BJ (cell line): ENCODE measurements at regions of chr6 and their contacts with region 1.

Region 1: DNA sequence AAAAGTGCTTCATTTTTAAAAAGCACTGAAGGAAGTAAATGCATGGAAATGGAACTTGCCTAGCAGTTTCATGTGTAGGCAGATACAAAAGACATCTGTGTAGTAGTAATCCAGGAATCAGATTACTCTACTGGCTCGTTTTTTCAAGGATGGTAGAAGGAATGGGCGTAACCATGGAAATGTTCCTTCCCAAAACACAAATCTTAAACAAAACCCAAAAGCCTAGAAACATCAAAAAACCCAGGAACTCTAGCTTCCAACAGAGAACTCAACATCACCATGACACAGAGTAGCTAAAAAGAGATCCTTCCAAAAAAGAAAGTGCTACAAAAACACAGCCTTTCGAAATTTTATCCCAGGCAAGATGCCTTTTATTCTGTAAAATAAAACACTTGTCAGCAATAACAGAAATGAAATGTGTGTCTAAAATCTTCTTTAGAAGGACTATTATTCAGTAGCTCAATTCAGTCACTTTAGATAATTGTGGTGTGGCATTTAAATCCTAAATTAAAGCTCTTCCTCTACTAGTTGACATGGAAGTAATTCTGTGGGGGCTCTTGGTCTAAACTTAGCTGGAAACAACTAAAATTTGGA is 81.7 kb downstream of the FAM217A start:
- DNase-seq: peak; percentile 65
- H3K4me3 ChIP-seq: no peak overlapping the region
- H3K27me3 ChIP-seq: no peaks in the 10 kb centered on the region
- CTCF ChIP-seq: no peak

Region 2: DNA sequence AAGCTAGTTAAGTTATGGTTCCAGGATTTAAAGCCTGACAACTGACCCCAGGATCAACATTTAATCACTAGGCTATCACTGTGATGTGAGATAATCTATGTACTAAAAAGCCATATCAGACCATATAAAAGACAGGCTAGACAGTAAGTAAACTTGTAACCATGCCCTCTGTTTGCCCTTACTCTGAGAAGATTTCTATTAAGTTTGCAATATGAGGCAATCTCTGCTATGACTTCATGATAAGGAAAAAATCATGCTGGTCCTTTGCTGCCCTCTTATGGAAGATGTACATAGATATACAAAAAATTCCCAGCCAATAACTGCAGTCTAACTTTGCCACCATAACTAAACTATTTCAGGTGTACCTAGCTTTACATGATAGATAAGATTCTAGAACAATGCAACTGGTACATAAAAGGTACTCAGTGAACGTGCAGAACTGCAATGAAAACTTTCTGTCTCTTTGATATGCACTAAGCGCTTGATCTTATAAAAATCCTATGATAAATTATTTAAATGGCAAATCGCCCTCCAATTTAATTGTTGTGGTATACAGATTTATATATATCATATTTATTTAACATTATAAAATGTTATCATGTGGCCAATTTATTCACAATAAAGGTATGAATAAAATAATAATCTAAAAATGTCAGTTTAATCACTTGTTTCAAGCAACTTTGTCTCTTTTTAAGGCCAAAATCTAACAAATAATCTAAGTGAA is 11.2 kb after region 1 on chr6:
- CTCF ChIA-PET with region 1: interaction called, 13 read pairs
- POLR2A ChIA-PET with region 1: no interaction called
- DNase-seq: peak; percentile 77
- H3K4me3 ChIP-seq: no peak overlapping the region
- H3K27me3 ChIP-seq: no peaks in the 10 kb centered on the region
- CTCF ChIP-seq: peak; percentile 65

Region 3: GRCh38 chr6:4125936-4126864 is 128.9 kb after region 1 on chr6:
- CTCF ChIA-PET with region 1: no interaction called
- POLR2A ChIA-PET with region 1: no interaction called
- DNase-seq: peak; percentile 60
- H3K4me3 ChIP-seq: no peak overlapping the region
- H3K27me3 ChIP-seq: no peaks in the 10 kb centered on the region
- CTCF ChIP-seq: peak; percentile 56